ENCODE measurements at regions of chr14 and their contacts with region 1.

Region 1: DNA sequence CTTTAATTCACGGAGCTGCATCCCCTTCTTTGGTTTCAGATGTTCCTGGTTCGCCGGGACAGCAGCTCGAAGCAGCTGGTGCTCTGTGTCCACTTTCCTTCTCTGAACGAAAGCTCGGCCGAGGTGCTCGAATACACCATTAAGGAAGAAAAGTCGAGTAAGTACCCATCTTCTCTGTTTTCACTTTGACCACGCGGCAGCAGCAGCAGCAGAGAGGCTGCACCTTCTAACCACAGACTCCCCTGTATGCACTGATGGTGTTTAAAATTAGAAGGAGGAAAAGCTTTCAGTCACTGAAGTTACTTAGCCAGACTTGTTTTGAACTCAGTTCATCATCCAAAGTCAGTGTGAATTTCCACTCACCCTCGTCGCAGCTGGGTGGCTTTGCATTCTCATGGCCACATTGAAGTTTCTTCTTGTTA is 63.8 kb downstream of the RIN3 start:
- DNase-seq: no peak
- H3K4me3 ChIP-seq: no peak overlapping the region
- CTCF ChIP-seq: no peak

Region 2: DNA sequence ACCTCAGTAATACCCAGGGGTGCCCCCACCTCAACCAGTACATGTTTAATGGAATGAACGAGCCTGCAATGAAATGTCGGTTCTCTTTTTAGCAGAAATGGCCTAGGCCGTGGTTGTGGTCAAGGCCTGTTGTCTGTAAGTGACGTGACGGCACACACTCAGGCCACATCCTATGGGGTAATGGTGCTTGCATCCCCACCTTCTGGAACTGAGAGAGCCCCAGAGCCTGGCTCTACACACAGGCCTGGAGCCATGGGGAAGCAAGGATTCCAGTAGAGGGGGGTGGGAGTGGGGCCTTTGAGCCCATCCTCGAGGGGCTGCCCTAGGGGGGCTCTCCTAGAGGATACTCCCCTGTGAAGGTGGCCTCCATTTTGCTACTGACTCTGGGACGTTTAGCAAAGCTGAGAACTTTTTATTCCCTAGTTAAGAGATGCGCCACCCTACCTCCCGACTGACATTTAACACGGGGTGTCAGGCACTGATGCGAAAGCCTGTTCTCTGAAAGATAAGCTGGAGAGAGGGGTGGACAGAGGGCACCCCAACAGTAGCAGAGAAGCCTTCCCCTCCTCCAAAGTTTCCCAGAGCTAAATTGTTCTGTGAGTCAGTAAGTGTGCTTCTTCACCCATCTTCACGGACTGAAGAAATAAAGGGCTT is 57.1 kb before region 1 on chr14:
- in situ Hi-C with region 1: loop called (anchors 10 kb)
- DNase-seq: no peak
- H3K4me3 ChIP-seq: no peak overlapping the region
- CTCF ChIP-seq: no peak

Region 3: GRCh38 chr14:92538412-92538985 is 38.8 kb before region 1 on chr14:
- in situ Hi-C with region 1: no loop called
- DNase-seq: no peak
- H3K4me3 ChIP-seq: no peak overlapping the region
- CTCF ChIP-seq: no peak

Region 4: GRCh38 chr14:92680781-92681650 is 103.7 kb after region 1 on chr14:
- in situ Hi-C with region 1: no loop called
- DNase-seq: peak; percentile 61
- H3K4me3 ChIP-seq: no peak overlapping the region
- CTCF ChIP-seq: peak; percentile 96

Measured in astrocyte of the cerebellum (primary cell).